GM10248 (cell line): ENCODE measurements at regions of chr3 and their contacts with region 1.

Region 1: DNA sequence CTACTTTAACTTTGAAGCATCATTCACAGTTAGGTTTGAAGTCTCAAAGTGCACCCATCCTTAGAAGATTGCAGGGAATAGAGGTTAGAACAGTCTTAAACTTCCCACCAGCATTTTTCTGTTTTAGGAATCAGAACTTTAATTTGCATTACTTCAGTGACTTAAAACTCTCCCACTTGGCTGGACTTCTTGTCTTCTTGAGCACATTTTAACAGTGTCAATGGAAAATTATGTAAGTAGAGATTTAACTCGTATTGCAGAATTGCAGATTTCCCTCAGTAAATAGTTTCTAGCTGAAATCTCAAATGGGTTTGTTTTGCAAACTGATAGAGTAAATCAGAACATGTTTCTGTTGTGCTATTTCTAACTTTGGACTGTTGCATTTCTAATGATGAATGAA is 369.6 kb downstream of the OTOL1 start:
- DNase-seq: no peak
- CTCF ChIP-seq: no peak

Region 2: GRCh38 chr3:161854232-161854771 is 11.9 kb before region 1 on chr3:
- CTCF ChIA-PET with region 1: interaction called, 17 read pairs
- POLR2A ChIA-PET with region 1: no interaction called
- DNase-seq: peak; percentile 10
- CTCF ChIP-seq: peak; percentile 32

Region 3: DNA sequence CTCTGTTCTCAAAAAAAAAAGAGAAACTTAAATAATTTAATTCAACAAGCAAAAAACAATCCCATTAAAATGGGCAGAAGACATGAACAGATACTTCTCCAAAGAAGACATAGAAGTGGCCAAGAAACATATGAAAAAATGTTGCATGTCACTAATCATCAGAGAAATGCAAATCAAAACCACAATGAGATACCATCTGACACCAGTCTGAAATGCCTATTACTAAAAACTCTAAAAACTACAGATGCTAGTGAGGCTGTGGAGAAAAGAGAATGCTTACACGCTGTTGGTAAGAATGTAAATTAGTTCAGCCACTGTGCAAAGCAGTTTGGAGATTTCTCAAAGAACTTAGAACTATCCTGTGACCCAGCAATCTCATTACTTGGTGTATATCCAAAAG is 13.3 kb after region 1 on chr3:
- CTCF ChIA-PET with region 1: no interaction called
- POLR2A ChIA-PET with region 1: no interaction called
- DNase-seq: no peak
- CTCF ChIP-seq: no peak